H1 (cell line): ENCODE measurements at regions of chr6 and their contacts with region 1.

Region 1: DNA sequence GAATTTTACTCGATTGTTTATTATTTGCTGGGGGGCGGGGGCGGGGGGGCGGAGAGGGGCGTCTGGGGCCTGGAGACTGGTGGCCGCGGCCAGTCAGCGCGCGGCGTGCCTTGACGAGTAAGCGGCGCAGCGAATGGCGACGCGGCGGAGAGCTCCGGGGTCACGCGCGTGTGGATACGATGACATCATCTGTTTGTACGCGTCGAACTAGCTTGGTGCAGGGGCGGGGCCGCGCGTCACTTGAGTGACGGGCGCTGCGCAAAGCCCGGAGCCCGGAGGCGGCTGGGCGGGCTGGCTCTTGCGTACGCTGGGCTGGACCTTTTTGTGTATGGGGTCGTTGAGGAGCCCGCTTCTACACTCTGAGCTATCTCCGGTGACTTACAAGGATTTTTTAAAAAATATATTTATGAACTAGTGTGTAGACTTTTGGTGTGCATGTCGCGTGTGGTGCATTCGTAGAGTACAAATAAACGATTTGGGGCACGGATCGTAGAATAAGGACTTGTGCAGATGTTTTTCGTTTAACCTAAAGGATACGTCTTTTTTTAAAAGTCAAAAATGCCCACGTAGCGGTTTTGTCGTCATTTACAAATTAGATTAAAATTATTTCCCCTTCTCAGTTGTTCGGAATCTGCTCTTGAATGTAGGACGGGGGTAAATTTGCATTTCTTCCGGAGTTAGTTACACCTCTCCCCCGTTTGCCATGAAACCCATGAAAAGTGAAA is 2.2 kb upstream of the FOXO3 start:
- DNase-seq: peak; percentile 93 to 94
- H3K4me3 ChIP-seq: peak overlapping the region; percentile 86 to 99 (median 92)
- H3K27ac ChIP-seq: peak overlapping the region; percentile 91; the same call in 1 of the 2 replicates
- H3K4me1 ChIP-seq: peaks cover 5 to 10% (median 7%) of the 10 kb centered on the region in 4 experiments
- H3K27me3 ChIP-seq: peaks cover 0 to 23% (median 11%) of the 10 kb centered on the region in 4 experiments; a peak in 6 of 7 replicates
- CTCF ChIP-seq: no peak
- EP300 ChIP-seq: peak in 1 of 2 experiments; percentile 57; a peak in 1 of 3 replicates
- POLR2A ChIP-seq: peak; percentile 0 to 9; a peak in 1 of 3 replicates
- RAD21 ChIP-seq: 0 out of 4 replicates have a peak, but pooled peaks of 1 of the 2 experiments have one; percentile 13

Region 2: DNA sequence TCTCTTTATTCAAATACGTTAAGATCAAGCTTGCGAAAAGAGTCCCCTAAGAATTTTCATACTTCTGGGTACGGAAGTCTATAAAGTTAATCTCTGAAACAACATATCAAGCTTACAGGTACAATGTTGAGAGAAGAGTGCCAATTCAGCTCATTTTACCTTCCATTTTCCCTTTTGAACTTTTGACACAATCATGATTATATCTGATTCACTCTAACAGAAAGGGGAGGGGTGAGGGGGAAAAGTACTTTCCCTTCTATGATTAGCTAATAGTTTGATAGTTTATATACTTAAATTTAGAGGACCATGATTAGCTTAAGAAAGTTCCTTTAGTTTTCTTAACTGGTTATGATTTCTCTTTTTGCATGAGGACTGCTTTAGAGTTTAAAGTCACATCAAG is 331.2 kb before region 1 on chr6:
- CTCF ChIA-PET with region 1: no interaction called
- POLR2A ChIA-PET with region 1: no interaction called
- DNase-seq: no peak
- H3K4me3 ChIP-seq: peak overlapping the region in 1 of 4 experiments; percentile 14; a peak in 1 of 8 replicates
- H3K27ac ChIP-seq: no peak overlapping the region
- H3K4me1 ChIP-seq: peaks cover 0 to 3% (median 0%) of the 10 kb centered on the region in 4 experiments; a peak in 1 of 7 replicates
- H3K27me3 ChIP-seq: no peaks in the 10 kb centered on the region
- CTCF ChIP-seq: no peak
- EP300 ChIP-seq: no peak
- POLR2A ChIP-seq: no peak
- RAD21 ChIP-seq: no peak

Region 3: DNA sequence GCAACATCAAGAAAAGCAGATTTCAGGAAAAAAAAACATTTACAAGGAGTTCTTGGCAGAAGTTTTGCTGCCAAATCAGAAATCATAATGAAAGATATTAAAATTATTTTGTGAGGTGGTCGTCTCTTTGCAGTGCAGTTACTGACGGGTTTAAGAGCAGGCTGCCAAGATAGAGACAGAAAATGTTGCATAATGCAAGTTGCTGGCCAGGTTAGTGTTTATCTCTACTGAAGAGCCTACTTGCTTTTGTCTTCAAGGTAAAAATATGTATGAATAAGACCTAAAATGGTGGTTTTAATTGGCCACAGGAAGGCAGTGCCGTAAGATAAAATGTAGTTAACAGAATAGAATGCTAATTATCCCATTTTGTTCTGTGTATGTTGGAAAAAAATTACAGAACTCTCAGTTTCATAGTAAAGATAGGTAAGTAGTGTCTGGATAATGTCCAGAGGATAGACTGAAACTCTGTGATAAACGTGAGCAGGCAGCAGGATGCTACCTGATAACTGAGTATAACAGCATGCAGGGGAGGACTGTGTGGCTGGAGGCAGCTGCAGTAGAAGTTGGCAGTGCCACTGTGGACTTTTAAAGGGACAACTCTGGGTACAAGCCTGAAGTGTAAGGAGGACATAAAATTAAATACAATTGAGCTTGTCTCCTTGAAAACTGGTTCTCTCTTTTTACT is 16.1 kb after region 1 on chr6:
- CTCF ChIA-PET with region 1: interaction called, 4 read pairs
- POLR2A ChIA-PET with region 1: interaction called, 12 read pairs
- DNase-seq: no peak
- H3K4me3 ChIP-seq: no peak overlapping the region
- H3K27ac ChIP-seq: no peak overlapping the region
- H3K4me1 ChIP-seq: no peaks in the 10 kb centered on the region
- H3K27me3 ChIP-seq: no peaks in the 10 kb centered on the region
- CTCF ChIP-seq: no peak
- EP300 ChIP-seq: no peak
- POLR2A ChIP-seq: no peak
- RAD21 ChIP-seq: no peak